GM13977 (cell line): ENCODE measurements at regions of chr3 and their contacts with region 1.

Region 1: GRCh38 chr3:25664810-25665314 is at the start of gene TOP2B:
- DNase-seq: peak; percentile 95
- CTCF ChIP-seq: no peak

Region 2: DNA sequence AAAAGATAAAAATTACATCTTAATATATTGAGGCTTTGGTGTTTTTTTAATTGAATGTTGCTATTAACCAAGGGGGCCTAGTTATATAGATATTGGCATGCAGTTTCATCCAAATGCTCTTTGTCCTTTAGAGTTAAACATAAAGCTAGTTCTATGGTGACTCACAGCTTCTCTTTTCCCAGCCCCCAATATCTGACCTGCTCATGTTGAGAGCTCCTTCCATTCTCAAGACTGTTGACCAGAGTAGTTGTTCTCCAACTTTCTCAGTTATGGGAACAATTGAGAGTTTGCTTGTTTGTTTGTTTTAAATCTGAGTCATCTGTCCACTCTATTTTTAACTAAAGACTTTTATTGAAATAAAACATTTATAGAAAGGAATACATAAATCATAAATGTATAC is 252.6 kb before region 1 on chr3:
- in situ Hi-C with region 1: no loop called
- DNase-seq: no peak
- CTCF ChIP-seq: no peak

Region 3: GRCh38 chr3:25723802-25724201 is 58.9 kb after region 1 on chr3:
- in situ Hi-C with region 1: no loop called
- DNase-seq: peak; percentile 16
- CTCF ChIP-seq: no peak

Region 4: GRCh38 chr3:26118165-26118564 is 453.3 kb after region 1 on chr3:
- in situ Hi-C with region 1: loop called (anchors 25 kb)
- DNase-seq: no peak
- CTCF ChIP-seq: peak; percentile 38

Region 5: DNA sequence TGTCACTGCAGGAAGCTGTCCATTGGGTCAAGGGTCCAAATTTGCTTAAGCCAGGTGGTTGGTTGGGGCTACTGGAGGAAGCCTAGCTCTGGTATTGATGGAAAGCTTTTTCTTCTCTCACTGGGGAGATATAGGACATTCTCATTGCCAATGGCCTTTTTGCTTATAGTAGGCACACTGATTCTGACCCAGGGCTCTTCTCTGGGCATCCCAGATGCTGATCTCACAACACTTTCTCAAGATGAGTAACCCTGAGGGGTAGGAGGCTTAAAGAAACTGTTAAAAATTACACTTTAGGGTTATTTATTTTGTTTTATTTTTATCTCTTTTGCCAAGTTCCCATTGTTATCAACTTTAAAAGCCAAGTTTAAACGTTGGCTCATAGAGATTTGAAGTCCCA is 1295.5 kb after region 1 on chr3:
- in situ Hi-C with region 1: no loop called
- DNase-seq: no peak
- CTCF ChIP-seq: no peak